ENCODE measurements at regions of chrX and their contacts with region 1.

Region 1: DNA sequence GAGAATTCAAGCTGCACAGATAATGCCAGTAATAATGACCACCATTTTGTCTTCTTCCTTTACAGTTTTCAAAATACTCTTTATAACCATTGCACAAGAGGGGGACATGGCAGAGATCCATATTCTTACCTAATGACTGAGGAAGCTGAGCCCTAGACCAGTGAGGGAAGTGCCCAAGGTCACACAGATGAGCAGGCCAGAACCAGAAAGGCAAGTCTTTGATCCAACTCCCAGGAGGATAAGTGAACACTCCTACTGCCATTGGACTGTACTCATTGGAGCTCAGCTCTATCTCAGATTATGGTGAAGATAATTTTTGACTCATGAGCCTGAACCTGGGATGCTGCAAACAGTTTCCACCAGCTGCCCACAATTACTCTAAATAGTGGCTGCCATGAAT is 28.6 kb downstream of the AMER1 start:
- DNase-seq: no peak
- H3K4me3 ChIP-seq: no peak overlapping the region
- H3K27ac ChIP-seq: no peak overlapping the region
- H3K27me3 ChIP-seq: no peaks in the 10 kb centered on the region
- CTCF ChIP-seq: no peak

Region 2: GRCh38 chrX:63718010-63718694 is 458.7 kb before region 1 on chrX:
- CTCF ChIA-PET with region 1: no interaction called
- POLR2A ChIA-PET with region 1: no interaction called
- DNase-seq: no peak
- H3K4me3 ChIP-seq: no peak overlapping the region
- H3K27ac ChIP-seq: no peak overlapping the region
- H3K27me3 ChIP-seq: no peaks in the 10 kb centered on the region
- CTCF ChIP-seq: no peak

Region 3: DNA sequence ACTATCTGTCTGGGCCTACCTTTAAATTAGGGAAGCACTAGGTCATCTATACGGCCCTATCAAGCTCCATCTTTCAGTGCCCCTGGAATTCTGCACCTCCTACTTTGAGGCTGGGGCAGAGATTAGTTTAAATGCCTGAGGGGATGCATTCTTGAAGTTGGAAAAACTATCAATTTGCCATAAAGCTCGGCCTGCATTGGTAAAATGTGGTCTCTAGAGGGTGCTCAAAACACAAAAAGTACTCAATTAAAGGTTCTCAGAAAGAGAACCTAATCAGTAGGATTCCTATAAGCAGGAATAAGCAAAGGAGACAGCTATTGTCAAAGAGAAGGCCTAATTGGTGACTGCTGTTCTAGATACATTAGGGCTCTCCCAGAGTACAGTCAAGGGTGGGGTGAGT is 83.1 kb before region 1 on chrX:
- CTCF ChIA-PET with region 1: interaction called, 12 read pairs
- POLR2A ChIA-PET with region 1: no interaction called
- DNase-seq: no peak
- H3K4me3 ChIP-seq: no peak overlapping the region
- H3K27ac ChIP-seq: no peak overlapping the region
- H3K27me3 ChIP-seq: no peaks in the 10 kb centered on the region
- CTCF ChIP-seq: peak; percentile 25; the same call in 1 of the 2 replicates

Region 4: GRCh38 chrX:64204701-64205440 is 28.0 kb after region 1 on chrX:
- CTCF ChIA-PET with region 1: no interaction called
- POLR2A ChIA-PET with region 1: no interaction called
- DNase-seq: no peak
- H3K4me3 ChIP-seq: peak overlapping the region; percentile 66
- H3K27ac ChIP-seq: peak overlapping the region; percentile 70
- H3K27me3 ChIP-seq: no peaks in the 10 kb centered on the region
- CTCF ChIP-seq: no peak

Measured in AG04450 (cell line).